HEK293T (cell line): ENCODE measurements at regions of chr1 and their contacts with region 1.

Region 1: GRCh38 chr1:156212833-156213643 is at the start of gene PMF1:
- DNase-seq: peak; percentile 99

Region 2: GRCh38 chr1:156146020-156146768 is 66.8 kb before region 1 on chr1:
- CTCF ChIA-PET with region 1: interaction called, 10 read pairs
- POLR2A ChIA-PET with region 1: interaction called, 22 read pairs
- DNase-seq: peak; percentile 81

Region 3: GRCh38 chr1:156160743-156161171 is 52.3 kb before region 1 on chr1:
- CTCF ChIA-PET with region 1: no interaction called
- POLR2A ChIA-PET with region 1: interaction called, 19 read pairs
- DNase-seq: peak; percentile 93

Region 4: GRCh38 chr1:156193488-156194299 is 19.3 kb before region 1 on chr1 and contains the start of gene SLC25A44:
- CTCF ChIA-PET with region 1: interaction called, 3 read pairs
- POLR2A ChIA-PET with region 1: interaction called, 63 read pairs
- DNase-seq: peak; percentile 98

Region 5: DNA sequence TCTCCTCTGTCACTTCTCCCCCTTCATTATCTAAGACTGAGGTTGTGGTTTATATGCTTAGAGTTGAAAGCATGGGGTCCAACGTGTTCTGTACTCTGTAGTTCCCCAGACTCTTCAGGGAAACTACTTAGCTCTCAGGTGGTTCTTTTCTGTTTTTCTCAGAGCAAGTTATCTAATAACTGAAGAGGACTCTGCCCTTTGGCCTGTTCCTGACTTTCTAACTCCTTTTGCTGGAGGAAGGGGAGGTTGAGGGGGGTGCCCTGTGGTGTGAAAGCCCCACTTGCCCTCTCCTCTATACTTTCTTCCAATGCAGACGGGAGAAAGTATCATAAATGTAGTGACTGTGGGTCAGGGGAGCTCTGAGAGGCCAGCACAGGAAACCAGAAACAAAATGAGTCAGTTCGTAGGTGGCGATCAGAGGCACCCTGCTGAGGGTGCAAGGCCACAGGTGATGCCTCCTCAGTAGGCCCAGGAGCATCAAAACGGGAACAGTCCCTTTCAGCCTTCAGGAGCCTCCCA is 14.1 kb before region 1 on chr1:
- CTCF ChIA-PET with region 1: interaction called, 3 read pairs
- POLR2A ChIA-PET with region 1: interaction called, 63 read pairs
- DNase-seq: no peak

Region 6: GRCh38 chr1:156226116-156226538 is 13.1 kb after region 1 on chr1:
- CTCF ChIA-PET with region 1: interaction called, 18 read pairs
- POLR2A ChIA-PET with region 1: interaction called, 30 read pairs
- DNase-seq: no peak

Region 7: DNA sequence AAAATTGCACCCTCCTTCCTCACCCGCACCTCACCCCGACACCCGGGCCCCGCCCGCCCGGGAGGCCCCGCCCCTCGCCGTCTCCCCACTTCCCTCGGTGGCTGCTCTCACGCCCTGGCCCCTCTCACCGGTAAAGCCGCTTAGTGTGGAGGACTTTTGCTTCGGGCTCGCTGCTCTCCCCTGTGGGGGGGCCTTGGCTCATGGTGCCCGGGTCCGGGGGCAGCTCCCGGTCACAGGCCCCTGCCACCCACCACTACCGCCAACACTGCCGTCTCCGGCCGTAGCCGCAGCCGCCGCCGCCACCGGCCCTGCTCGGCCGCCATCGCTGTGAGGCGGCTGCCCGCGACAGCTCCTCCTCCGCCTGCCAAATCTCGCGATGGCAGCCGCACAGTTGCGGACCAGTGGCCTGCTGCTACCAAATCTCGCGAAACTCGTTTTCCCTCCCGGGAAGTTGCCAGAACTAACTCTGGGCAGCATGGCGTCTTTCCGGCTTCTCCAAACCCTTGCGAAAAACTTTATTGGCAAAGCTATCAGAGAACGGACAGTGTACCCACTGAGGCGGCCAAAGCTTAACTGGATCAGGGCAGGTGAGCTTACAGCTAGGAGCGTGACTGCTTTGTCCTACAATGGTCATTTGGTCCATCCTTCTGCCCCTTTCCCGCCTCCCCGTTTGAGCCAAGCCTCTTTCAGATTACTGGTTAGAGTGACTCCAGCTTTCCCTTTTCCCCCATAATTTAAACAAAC is 69.6 kb after region 1 on chr1 and contains the start of gene SMG5:
- CTCF ChIA-PET with region 1: no interaction called
- POLR2A ChIA-PET with region 1: interaction called, 16 read pairs
- DNase-seq: peak; percentile 100